Naive thymus-derived CD4-positive, alpha-beta T cell (primary cell): ENCODE measurements at regions of chr5 and their contacts with region 1.

Region 1: DNA sequence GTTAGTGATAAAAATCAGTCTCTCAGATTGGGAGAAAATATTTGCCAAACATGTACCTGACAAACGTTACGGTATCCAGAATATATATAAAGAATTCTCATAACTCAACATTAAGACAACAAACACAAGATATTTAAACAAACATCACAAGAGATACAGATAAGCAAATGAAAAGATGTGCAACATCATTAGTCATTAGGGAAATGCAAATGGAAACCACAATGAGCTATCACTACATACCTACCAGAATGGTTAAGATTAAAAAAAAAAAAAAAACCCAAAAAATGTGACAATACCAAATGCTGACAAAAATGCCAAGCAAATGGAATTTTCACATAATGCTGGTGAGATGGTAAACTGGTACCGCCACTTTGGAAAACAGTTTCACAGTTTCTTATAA is 15.4 kb downstream of the CERT1 start:
- DNase-seq: no peak
- ATAC-seq: no peak
- H3K4me3 ChIP-seq: no peak overlapping the region
- H3K4me3 Mint-ChIP-seq: no peak overlapping the region
- H3K27ac ChIP-seq: no peak overlapping the region
- H3K27ac Mint-ChIP-seq: no peak overlapping the region
- H3K4me1 ChIP-seq: no peaks in the 10 kb centered on the region
- H3K4me1 Mint-ChIP-seq: peaks cover 4 to 44% (median 20%) of the 10 kb centered on the region in 7 donors
- H3K27me3 ChIP-seq: no peaks in the 10 kb centered on the region
- H3K27me3 Mint-ChIP-seq: no peaks in the 10 kb centered on the region

Region 2: GRCh38 chr5:75433814-75434506 is 62.1 kb before region 1 on chr5:
- CTCF ChIA-PET with region 1: no interaction called
- POLR2A ChIA-PET with region 1: no interaction called
- intact Hi-C with region 1: no loop called
- DNase-seq: no peak
- ATAC-seq: no peak
- H3K4me3 ChIP-seq: no peak overlapping the region
- H3K4me3 Mint-ChIP-seq: no peak overlapping the region
- H3K27ac ChIP-seq: no peak overlapping the region
- H3K27ac Mint-ChIP-seq: no peak overlapping the region
- H3K4me1 ChIP-seq: no peaks in the 10 kb centered on the region
- H3K4me1 Mint-ChIP-seq: peaks cover 0 to 11% (median 4%) of the 10 kb centered on the region in 7 donors
- H3K27me3 ChIP-seq: no peaks in the 10 kb centered on the region
- H3K27me3 Mint-ChIP-seq: no peaks in the 10 kb centered on the region

Region 3: GRCh38 chr5:75469017-75469416 is 27.0 kb before region 1 on chr5:
- CTCF ChIA-PET with region 1: no interaction called
- POLR2A ChIA-PET with region 1: no interaction called
- intact Hi-C with region 1: loop called in 1 of 2 experiments (anchors 2 kb)
- DNase-seq: no peak
- ATAC-seq: no peak
- H3K4me3 ChIP-seq: no peak overlapping the region
- H3K4me3 Mint-ChIP-seq: no peak overlapping the region
- H3K27ac ChIP-seq: no peak overlapping the region
- H3K27ac Mint-ChIP-seq: no peak overlapping the region
- H3K4me1 ChIP-seq: peaks cover 0 to 19% of the 10 kb centered on the region in 2 donors
- H3K4me1 Mint-ChIP-seq: peaks cover 13 to 49% (median 35%) of the 10 kb centered on the region in 7 donors
- H3K27me3 ChIP-seq: no peaks in the 10 kb centered on the region
- H3K27me3 Mint-ChIP-seq: no peaks in the 10 kb centered on the region